ENCODE measurements at regions of chr10 and their contacts with region 1.

Region 1: GRCh38 chr10:101141616-101142532 is 10.8 kb downstream of the TLX1 start:
- DNase-seq: peak; percentile 88
- CTCF ChIP-seq: peak; percentile 96

Region 2: GRCh38 chr10:101050208-101051069 is 91.4 kb before region 1 on chr10:
- CTCF ChIA-PET with region 1: interaction called, 34 read pairs
- POLR2A ChIA-PET with region 1: no interaction called
- DNase-seq: peak; percentile 85
- CTCF ChIP-seq: peak; percentile 82

Region 3: GRCh38 chr10:101075775-101076174 is 66.1 kb before region 1 on chr10:
- CTCF ChIA-PET with region 1: interaction called, 13 read pairs
- POLR2A ChIA-PET with region 1: no interaction called
- DNase-seq: no peak
- CTCF ChIP-seq: no peak

Region 4: DNA sequence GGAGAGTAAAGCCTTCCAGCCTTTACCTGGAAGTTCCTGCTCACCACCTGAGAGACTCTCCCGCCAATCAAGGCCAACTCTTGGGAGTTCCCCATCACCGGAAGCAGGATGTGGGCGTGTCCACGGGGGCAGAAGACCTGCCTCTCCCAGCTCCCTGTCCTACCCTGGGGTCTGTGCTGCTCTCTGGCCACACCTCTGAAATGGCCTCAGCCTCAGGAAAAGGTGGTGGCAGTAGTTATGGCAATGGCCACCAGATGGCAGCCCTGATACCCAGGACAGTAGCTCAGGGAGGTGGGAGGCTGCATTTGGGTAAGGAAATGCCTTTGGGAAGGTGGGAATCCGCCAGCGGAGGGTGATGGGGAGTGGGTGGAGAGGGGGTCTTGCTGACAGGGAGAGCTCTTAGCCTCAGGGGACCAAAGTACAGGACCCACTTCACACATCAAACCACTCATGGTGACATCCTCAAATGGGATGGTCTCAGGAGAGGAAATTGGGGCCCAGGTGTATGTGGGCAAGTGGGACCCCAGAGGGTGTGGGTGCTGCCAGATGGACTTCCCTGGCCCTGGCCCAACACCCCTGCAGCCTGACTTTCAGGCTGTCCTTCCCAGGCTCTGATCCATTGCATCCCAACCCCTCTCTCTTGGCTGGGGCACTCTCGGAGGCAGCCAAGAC is 46.2 kb before region 1 on chr10:
- CTCF ChIA-PET with region 1: interaction called, 385 read pairs
- POLR2A ChIA-PET with region 1: interaction called, 3 read pairs
- DNase-seq: peak; percentile 86
- CTCF ChIP-seq: peak; percentile 84

Region 5: DNA sequence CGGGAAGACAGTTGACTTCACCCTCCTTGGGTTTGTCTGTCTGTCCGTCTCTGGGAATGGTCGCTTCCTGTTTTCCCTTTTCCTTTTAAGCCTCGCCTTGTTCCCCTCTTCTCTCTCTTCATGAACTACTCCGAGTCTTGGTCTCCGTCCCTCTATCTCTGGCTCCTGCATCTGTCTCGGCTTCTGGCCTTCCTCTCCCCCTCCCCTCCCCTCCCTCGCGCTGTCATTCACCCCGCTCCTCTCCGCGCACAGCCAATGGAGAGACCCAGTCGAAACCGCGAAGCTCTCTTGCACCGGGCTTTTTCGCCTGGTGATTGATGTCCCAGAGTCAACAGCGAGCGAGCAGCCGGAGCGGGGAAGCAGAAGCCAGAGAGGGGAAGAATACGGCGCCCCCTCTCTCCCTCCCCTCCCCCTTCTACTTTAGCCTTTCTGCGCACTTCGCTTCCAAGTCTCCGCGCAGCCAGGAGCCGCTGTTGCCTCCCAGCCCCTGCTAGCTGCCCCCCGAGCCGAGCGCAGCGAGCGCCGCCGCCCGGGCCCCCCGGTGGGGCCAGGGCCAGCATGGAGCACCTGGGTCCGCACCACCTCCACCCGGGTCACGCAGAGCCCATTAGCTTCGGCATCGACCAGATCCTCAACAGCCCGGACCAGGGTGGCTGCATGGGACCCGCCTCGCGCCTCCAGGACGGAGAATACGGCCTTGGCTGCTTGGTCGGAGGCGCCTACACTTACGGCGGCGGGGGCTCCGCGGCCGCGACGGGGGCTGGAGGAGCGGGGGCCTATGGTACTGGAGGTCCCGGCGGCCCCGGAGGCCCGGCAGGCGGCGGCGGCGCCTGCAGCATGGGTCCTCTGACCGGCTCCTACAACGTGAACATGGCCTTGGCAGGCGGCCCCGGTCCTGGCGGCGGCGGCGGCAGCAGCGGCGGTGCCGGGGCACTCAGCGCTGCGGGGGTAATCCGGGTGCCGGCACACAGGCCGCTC is 10.6 kb before region 1 on chr10 and contains the start of gene TLX1:
- CTCF ChIA-PET with region 1: interaction called, 60 read pairs
- POLR2A ChIA-PET with region 1: no interaction called
- DNase-seq: no peak
- CTCF ChIP-seq: no peak

Region 6: DNA sequence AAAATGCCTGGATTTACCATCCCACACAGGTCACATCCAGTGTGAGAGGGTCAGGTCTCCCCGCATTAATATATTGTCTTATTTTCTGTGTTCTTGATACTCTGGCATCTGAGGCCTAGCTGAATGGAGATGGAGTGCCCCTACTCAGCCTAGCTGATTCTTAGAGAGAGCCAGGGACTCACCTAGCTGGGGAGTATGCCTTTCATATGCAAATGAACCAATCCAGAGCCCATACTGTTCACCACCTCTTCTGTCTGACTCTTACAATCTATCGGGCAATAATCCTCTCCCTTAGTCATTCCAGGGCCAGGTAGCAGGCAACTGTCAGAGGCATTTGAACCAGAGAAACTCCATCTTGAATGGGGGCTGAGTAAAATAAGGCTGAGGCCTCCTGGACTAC is 41.1 kb after region 1 on chr10:
- CTCF ChIA-PET with region 1: interaction called, 11 read pairs
- POLR2A ChIA-PET with region 1: no interaction called
- DNase-seq: no peak
- CTCF ChIP-seq: no peak